A673 (cell line): ENCODE measurements at regions of chr1 and their contacts with region 1.

Region 1: DNA sequence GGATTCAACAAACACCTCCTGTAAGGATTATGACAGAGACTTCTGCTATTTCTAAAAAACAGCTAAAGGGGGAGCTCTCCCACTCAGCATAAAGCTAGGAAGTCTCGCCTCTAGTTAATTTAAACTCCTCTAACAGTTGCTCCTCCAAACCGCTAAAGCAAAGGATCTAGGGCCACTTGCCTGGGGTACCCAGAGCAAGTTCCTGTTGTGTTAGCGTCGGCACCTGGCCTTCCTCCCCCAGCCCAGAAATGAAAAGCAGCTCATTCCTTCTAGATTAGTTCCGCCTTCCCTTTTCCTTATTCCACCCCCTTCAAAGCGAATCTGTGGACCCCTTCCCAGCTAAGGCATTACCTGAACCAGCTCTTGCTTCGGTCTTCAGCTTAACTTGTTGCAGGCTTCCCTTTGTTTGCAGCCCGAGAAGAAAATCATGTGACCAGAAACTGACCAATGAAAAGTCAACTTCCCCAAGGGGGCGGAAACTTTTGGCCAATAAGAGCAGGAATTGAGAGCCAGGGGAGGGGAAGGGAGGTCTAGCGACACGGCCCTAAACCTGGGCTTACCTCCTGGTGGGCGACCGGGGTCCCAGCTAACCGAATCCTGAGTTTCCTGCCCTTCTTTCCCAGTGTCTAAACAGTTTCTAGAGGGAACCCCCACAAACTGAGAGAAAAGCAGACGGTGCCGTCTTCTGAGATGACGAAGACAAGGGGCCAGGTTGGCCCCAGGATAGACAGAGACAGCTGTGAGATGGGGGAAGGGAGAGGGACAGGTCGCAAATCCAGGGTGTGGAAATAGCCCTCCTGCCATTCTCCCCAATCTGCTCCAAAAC is at the start of gene PBXIP1:
- DNase-seq: peak; percentile 96
- H3K4me3 ChIP-seq: peak within 1 kb of the TSS; percentile 51
- H3K27ac ChIP-seq: peak within 1 kb of the TSS; percentile 77
- H3K4me1 ChIP-seq: peaks cover 19% of the 10 kb centered on the region
- H3K27me3 ChIP-seq: no peaks in the 10 kb centered on the region
- CTCF ChIP-seq: peak; percentile 54
- total RNA-seq, gene PBXIP1: 12.7 and 20.8 TPM in 2 replicates

Region 2: GRCh38 chr1:154371436-154371835 is 584.5 kb before region 1 on chr1:
- CTCF ChIA-PET with region 1: no interaction called
- POLR2A ChIA-PET with region 1: no interaction called
- intact Hi-C with region 1: no loop called
- DNase-seq: no peak
- H3K4me3 ChIP-seq: no peak overlapping the region
- H3K27ac ChIP-seq: no peak overlapping the region
- H3K4me1 ChIP-seq: no peaks in the 10 kb centered on the region
- H3K27me3 ChIP-seq: no peaks in the 10 kb centered on the region
- CTCF ChIP-seq: no peak

Region 3: DNA sequence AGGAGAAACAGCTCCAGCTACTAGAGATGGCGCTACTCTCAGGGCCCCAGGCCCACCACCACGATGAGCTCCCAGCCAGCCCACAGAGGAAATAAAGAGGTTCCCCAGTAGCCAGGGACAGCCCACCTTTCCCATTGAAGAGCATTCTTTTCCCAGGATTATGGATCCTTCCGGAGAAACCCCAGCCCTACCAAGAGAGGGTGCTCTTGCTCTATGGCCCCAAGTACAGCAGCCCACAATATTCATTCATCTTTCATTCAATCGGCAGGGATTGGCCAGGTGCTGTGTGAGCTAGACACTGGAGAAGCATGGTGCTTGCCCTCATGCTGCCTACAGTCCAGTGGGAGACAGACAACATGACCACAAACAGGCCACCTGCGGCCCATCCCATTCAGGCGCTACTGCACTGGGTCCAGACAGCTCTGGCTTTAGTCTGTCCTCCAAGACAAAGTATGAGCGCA is 49.3 kb before region 1 on chr1:
- CTCF ChIA-PET with region 1: no interaction called
- POLR2A ChIA-PET with region 1: no interaction called
- intact Hi-C with region 1: no loop called
- DNase-seq: no peak
- H3K4me3 ChIP-seq: no peak overlapping the region
- H3K27ac ChIP-seq: no peak overlapping the region
- H3K4me1 ChIP-seq: no peaks in the 10 kb centered on the region
- H3K27me3 ChIP-seq: no peaks in the 10 kb centered on the region
- CTCF ChIP-seq: peak; percentile 37

Region 4: DNA sequence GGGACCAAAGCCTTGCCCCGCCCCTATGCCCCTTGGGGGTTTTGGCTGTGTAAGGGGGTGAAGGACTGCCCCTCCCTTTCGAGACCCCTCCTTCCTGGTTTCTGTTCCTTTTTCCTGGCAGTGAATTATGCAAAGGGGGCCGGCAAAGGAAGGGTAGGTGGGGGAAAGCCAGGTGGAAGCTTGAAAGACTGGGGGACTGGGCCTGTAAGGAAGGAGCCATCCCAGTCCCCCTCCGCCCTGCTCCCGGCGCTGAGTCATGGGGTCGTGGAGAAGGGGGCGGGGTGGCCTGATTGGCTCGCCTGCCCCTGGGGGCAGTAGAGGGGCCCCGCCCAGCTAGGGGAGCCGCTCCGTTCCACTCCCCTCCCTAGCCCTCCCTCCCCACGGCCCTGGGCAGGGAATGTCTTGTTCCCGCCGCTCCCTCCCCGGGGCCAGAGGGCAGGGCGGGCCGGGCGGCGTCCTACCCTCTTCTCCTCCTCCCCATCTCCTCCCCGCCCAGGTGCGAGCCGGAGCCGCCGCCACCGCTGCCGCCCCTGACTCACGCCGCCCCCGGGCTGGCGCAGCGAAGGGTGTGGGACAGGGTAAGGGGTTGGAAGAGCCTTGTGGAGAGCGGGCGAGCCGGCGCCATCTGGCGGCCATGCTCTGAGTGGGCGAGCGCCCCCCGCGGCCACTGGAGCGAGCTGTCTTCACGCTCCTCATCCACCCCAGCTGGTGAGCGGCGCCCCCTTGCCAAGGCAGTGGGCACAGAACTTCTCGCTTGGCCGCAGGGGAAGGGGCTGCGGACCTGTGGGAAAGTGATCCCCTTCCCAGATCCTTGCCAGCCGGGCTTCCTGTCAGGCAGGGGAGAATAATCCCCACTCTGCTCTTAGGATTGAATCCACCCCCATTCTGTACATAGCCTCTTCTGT is 61.4 kb after region 1 on chr1:
- CTCF ChIA-PET with region 1: interaction called, 15 read pairs
- POLR2A ChIA-PET with region 1: no interaction called
- intact Hi-C with region 1: no loop called
- DNase-seq: peak; percentile 91
- H3K4me3 ChIP-seq: peak overlapping the region; percentile 49
- H3K27ac ChIP-seq: peak overlapping the region; percentile 81
- H3K4me1 ChIP-seq: peaks cover 18% of the 10 kb centered on the region
- H3K27me3 ChIP-seq: no peaks in the 10 kb centered on the region
- CTCF ChIP-seq: peak; percentile 100